Upper lobe of right lung (tissue), 1 donor: ENCODE measurements at regions of chr2 and their contacts with region 1.

Region 1: DNA sequence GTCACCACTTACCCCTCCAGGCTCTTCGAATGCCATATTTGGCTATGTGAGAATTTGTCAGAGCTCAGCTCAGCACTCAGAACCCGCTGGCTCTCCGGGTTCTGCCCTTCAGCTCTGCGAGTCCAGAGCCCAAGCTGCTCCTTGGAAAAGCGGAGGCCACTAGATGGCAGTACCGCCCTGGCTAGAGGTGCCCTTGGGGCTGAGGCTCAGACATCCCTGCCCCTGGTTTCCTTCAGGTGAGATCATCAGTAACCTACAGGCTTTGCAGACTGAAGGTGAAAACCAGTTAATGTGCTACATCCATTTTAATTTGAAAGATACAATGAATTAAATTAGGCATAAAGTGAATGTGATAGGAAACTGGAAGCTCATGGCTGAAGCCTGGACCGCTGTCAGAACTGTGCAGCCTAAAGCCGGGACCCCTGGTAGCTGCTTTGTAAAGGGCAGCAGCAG is 285.6 kb downstream of the AGAP1 start:
- DNase-seq: peak; percentile 79
- ATAC-seq: peak; percentile 90
- H3K4me3 ChIP-seq: no peak overlapping the region
- H3K27ac ChIP-seq: no peak overlapping the region
- H3K4me1 ChIP-seq: no peaks in the 10 kb centered on the region
- H3K27me3 ChIP-seq: no peaks in the 10 kb centered on the region
- CTCF ChIP-seq: peak; percentile 76

Region 2: DNA sequence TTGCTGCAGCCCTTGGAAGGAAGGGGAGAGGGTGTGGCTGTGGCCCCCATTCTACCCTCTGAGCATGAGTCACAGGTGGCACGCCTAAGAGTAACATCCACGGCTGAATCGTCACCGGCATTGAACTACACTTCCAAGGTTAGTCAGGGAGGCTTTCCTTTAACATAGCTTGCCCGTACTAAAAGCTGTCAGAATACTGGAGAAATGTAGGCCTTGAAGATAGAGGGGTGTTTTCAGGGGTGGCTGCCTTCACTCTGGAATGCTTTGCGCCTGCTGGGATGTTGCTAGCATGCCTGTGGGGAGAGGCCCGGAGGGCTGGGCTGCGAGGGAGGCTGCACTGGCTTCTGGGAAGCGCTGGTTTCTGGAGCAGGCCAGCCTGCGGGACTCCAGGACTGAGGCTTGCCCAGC is 48.1 kb after region 1 on chr2:
- intact Hi-C with region 1: no loop called
- DNase-seq: no peak
- ATAC-seq: no peak
- H3K4me3 ChIP-seq: no peak overlapping the region
- H3K27ac ChIP-seq: no peak overlapping the region
- H3K4me1 ChIP-seq: no peaks in the 10 kb centered on the region
- H3K27me3 ChIP-seq: no peaks in the 10 kb centered on the region
- CTCF ChIP-seq: no peak

Region 3: DNA sequence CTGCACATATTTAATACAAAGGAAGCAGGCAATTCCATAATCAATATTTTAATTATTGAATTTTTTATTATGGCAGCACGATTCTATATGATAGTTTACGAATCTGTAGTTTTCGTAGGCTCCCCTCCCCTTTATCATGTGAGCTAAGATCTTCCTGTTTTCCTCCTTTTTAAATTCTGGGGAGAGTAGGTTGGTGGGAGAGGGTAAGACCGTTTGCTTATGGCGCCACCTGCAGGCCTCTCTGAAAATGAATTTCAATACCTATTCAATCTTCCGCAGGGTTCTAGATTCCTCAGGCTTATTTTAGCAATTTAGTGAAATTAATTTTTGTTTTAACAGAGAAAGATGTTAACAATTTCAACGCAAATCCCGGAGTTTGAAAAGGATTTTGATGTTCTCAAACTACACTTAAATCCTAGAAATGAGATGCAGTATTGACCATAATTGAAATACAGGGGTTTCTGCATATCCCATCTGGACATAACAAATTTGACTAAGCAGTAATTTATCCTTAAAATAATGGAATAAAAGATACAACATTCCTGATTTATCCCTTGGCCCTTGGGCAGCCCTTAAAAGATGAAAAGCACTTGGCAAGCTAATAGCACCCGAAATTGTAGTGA is 401.5 kb after region 1 on chr2:
- intact Hi-C with region 1: loop called (anchors 10 kb)
- DNase-seq: no peak
- ATAC-seq: peak; percentile 62
- H3K4me3 ChIP-seq: no peak overlapping the region
- H3K27ac ChIP-seq: no peak overlapping the region
- H3K4me1 ChIP-seq: peaks cover 17% of the 10 kb centered on the region
- H3K27me3 ChIP-seq: peaks cover 77% of the 10 kb centered on the region
- CTCF ChIP-seq: peak; percentile 70